ENCODE measurements at regions of chr7 and their contacts with region 1.

Region 1: DNA sequence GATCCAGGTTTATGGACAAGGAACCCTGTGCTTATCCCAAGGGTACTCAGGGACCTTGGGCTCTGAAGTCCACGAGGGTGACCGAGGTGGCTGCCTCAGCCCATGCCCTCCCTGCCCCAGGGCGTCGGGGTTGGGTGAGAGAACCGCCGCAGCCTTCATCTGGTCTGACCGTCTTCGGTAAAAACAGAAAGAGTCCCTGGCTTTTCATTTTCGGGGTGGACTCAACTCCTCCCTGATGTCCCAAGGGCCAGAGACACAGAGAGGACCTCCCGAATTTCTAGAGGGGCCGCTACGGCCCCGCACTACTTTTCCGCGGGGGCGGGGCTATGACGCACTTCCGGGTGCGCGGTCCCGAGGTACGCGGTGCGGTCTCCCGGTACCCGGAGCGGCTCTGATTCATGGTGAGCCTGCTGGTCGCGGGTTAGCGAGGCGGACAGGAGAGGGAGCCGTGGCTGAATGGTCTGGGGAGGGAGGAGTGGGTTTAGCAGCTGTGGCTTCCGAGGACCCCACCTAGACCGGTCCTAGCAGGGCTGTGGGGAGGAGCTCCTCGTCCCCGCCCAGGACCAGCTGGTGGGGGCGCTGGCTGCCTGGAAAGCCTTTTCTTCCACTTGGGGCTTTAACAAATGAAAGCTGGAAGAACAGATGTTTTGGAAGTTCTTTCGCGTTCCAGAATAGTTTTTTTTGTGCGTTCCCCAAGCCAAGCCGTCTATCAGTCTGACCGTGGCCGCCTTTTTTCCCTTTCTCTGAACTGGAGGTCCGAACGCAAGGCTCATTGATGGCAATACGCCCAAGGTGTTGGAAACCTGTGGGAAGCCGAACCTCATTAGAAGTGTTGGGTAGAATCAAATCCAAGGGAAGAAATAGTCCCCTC is at the start of gene ZSCAN21:
- DNase-seq: peak; percentile 85 to 89
- ATAC-seq: peak; percentile 95 to 99 (median 98)
- H3K4me3 ChIP-seq: peak within 1 kb of the TSS; percentile 69 to 92 (median 84)
- H3K27ac ChIP-seq: peak within 1 kb of the TSS; percentile 90 to 98 (median 96)
- H3K4me1 ChIP-seq: peaks cover 4 to 24% (median 12%) of the 10 kb centered on the region in 9 donors
- H3K27me3 ChIP-seq: no peaks in the 10 kb centered on the region
- CTCF ChIP-seq: peak in 4 of 9 donors; percentile 30 to 48 (median 45)
- total RNA-seq, gene ZSCAN21: 5.4 to 10.0 (median 6.9) TPM

Region 2: GRCh38 chr7:99928994-99929729 is 120.5 kb before region 1 on chr7 and contains the start of gene GJC3:
- intact Hi-C with region 1: loop called in 1 of 10 experiments (anchors 10 kb)
- DNase-seq: peak; percentile 68 to 73
- ATAC-seq: peak; percentile 93 to 100 (median 96)
- H3K4me3 ChIP-seq: peak within 1 kb of the TSS in 8 of 10 donors; percentile 8 to 50 (median 42)
- H3K27ac ChIP-seq: peak within 1 kb of the TSS; percentile 14 to 79 (median 70)
- H3K4me1 ChIP-seq: peaks cover 4 to 21% (median 11%) of the 10 kb centered on the region in 9 donors
- H3K27me3 ChIP-seq: peaks cover 0 to 18% (median 0%) of the 10 kb centered on the region in 7 donors
- CTCF ChIP-seq: peak; percentile 12 to 75 (median 55)
- total RNA-seq, gene GJC3: 0.44 TPM in 1 of 10 donors, not detected in the others

Region 3: DNA sequence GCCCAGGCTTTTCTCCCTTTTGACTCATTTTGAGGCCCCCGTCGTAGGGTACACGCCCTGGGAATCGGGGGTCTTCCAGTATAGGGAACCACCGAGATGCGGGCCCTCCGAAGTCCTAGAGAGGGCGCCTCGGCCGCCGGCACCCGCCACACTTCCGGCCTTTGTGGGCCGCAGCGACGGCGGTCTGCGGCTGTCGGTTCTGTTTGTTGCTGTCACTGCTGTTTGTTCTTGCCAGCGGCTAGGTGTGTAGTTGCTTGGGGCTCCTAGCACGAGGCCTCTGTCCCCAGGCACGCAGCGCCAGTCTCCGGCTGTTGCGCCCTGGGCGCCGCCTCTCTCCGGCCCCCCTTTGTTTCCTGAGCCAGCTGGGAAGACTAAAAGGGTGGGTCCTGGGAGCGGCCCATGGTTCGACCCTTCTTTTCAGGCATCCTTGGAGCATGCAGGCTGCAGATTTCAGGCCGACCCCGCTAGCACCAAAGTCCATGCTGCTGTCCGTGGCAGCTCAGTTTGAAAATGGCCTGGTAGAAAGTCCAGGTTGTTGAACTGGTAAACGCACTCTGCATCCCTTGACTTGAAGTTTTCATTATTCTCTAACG is 52.0 kb before region 1 on chr7:
- intact Hi-C with region 1: loop called in 8 of 10 experiments (anchors 5 to 10 kb)
- DNase-seq: peak; percentile 50 to 71
- ATAC-seq: peak; percentile 67 to 85 (median 82)
- H3K4me3 ChIP-seq: peak overlapping the region; percentile 13 to 68 (median 61)
- H3K27ac ChIP-seq: peak overlapping the region; percentile 54 to 93 (median 85)
- H3K4me1 ChIP-seq: peaks cover 0 to 25% (median 17%) of the 10 kb centered on the region in 9 donors
- H3K27me3 ChIP-seq: no peaks in the 10 kb centered on the region
- CTCF ChIP-seq: peak in 7 of 9 donors; percentile 29 to 60 (median 45)

Region 4: GRCh38 chr7:100081535-100082102 is 31.9 kb after region 1 on chr7 and contains the start of gene ZNF3:
- intact Hi-C with region 1: loop called in 1 of 10 experiments (anchors 5 kb)
- DNase-seq: peak; percentile 98 to 99
- ATAC-seq: peak; percentile 96 to 98 (median 96)
- H3K4me3 ChIP-seq: peak within 1 kb of the TSS; percentile 71 to 99 (median 90)
- H3K27ac ChIP-seq: peak within 1 kb of the TSS; percentile 65 to 96 (median 89)
- H3K4me1 ChIP-seq: peaks cover 7 to 42% (median 35%) of the 10 kb centered on the region in 9 donors
- H3K27me3 ChIP-seq: no peaks in the 10 kb centered on the region
- CTCF ChIP-seq: peak; percentile 85 to 99 (median 95)
- total RNA-seq, gene ZNF3: 14.1 to 17.8 (median 15.3) TPM